PC-9 (cell line): ENCODE measurements at regions of chr1 and their contacts with region 1.

Region 1: GRCh38 chr1:202018468-202019255 is 8.3 kb downstream of the ELF3 start:
- DNase-seq: peak; percentile 96 to 99
- H3K4me3 ChIP-seq: peak overlapping the region; percentile 86; the same call in 1 of the 2 replicates
- H3K27ac ChIP-seq: peak overlapping the region; percentile 97
- H3K4me1 ChIP-seq: peaks cover 98% of the 10 kb centered on the region
- H3K27me3 ChIP-seq: no peaks in the 10 kb centered on the region
- CTCF ChIP-seq: no peak

Region 2: GRCh38 chr1:201870397-201870796 is 148.3 kb before region 1 on chr1:
- CTCF ChIA-PET with region 1: no interaction called
- POLR2A ChIA-PET with region 1: no interaction called
- intact Hi-C with region 1: no loop called
- DNase-seq: no peak
- H3K4me3 ChIP-seq: no peak overlapping the region
- H3K27ac ChIP-seq: no peak overlapping the region
- H3K4me1 ChIP-seq: no peaks in the 10 kb centered on the region
- H3K27me3 ChIP-seq: no peaks in the 10 kb centered on the region
- CTCF ChIP-seq: no peak

Region 3: DNA sequence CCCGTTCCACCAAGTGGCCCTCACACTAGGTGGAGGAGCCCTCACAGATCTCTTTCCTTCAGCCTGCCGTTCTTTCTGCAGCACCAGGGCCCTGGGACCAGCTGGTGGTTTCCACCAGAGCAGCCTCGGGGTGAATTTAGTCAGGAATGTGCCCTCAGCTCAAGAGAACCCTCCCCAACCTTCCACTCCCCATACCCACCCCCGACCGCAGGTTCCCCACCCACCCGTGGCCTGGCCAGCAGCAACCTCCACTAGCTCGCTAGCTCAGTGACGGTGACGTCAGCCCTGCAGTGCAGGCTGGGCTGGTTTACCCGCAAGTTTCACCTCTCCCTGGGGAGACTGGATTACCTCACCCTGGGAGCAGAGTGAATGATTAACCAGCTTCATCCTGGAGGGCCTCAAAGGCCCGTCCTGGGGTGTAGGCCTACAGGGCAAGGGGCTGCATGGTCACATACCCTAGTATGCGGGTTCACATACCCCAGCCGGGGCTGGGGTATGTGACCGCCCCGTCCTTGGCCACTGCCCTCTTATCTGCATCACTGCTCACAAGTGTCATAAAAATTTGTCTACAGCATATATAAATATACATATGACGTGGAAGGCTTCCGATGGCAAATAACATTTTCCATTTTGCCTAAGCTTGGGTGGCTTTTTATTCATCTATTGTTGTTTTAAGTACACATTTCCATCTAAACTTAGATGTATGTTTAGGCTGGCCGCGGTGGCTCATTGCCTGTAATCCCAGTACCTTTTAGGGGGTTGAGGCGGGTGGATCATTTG is 16.2 kb after region 1 on chr1:
- CTCF ChIA-PET with region 1: interaction called, 3 read pairs
- POLR2A ChIA-PET with region 1: interaction called, 56 read pairs
- intact Hi-C with region 1: loop called (anchors 1 kb)
- DNase-seq: peak; percentile 98
- H3K4me3 ChIP-seq: peak overlapping the region; percentile 26; the same call in 1 of the 2 replicates
- H3K27ac ChIP-seq: peak overlapping the region; percentile 89
- H3K4me1 ChIP-seq: peaks cover 68% of the 10 kb centered on the region
- H3K27me3 ChIP-seq: no peaks in the 10 kb centered on the region
- CTCF ChIP-seq: no peak

Region 4: GRCh38 chr1:202056644-202057461 is 38.2 kb after region 1 on chr1:
- CTCF ChIA-PET with region 1: interaction called, 4 read pairs
- POLR2A ChIA-PET with region 1: interaction called, 24 read pairs
- intact Hi-C with region 1: loop called (anchors 1 kb)
- DNase-seq: peak; percentile 97 to 98
- H3K4me3 ChIP-seq: no peak overlapping the region
- H3K27ac ChIP-seq: peak overlapping the region; percentile 98
- H3K4me1 ChIP-seq: peaks cover 64% of the 10 kb centered on the region
- H3K27me3 ChIP-seq: no peaks in the 10 kb centered on the region
- CTCF ChIP-seq: no peak

Region 5: GRCh38 chr1:202105539-202106276 is 87.0 kb after region 1 on chr1:
- CTCF ChIA-PET with region 1: interaction called, 3 read pairs
- POLR2A ChIA-PET with region 1: interaction called, 25 read pairs
- intact Hi-C with region 1: loop called (anchors 1 kb)
- DNase-seq: peak; percentile 91 to 95
- H3K4me3 ChIP-seq: peak overlapping the region; percentile 26; the same call in 1 of the 2 replicates
- H3K27ac ChIP-seq: peak overlapping the region; percentile 99
- H3K4me1 ChIP-seq: peaks cover 76% of the 10 kb centered on the region
- H3K27me3 ChIP-seq: no peaks in the 10 kb centered on the region
- CTCF ChIP-seq: no peak

Region 6: DNA sequence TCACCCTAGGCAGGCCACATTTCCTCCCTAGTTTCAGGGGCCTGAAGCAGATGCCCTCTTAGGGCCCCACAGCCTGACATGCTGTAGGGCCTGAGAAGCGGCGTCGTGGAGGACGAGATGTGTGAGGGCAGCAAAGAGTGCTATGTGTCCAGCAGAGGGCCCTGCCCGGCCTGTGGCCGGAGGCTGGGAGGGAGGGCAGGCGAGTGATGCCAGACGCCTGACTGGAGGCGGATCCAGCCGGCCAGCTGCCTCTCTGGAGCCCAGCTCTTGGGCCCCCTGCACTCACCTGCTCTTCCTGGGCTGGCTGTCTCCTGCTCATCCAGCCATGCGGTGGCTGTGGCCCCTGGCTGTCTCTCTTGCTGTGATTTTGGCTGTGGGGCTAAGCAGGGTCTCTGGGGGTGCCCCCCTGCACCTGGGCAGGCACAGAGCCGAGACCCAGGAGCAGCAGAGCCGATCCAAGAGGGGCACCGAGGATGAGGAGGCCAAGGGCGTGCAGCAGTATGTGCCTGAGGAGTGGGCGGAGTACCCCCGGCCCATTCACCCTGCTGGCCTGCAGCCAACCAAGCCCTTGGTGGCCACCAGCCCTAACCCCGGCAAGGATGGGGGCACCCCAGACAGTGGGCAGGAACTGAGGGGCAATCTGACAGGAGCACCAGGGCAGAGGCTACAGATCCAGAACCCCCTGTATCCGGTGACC is 104.1 kb after region 1 on chr1 and contains the start of gene GPR37L1:
- CTCF ChIA-PET with region 1: interaction called, 3 read pairs
- POLR2A ChIA-PET with region 1: interaction called, 7 read pairs
- intact Hi-C with region 1: loop called (anchors 1 kb)
- DNase-seq: peak; percentile 51 to 65
- H3K4me3 ChIP-seq: no peak within 1 kb of the TSS
- H3K27ac ChIP-seq: no peak within 1 kb of the TSS
- H3K4me1 ChIP-seq: peaks cover 11% of the 10 kb centered on the region
- H3K27me3 ChIP-seq: no peaks in the 10 kb centered on the region
- CTCF ChIP-seq: peak; percentile 57
- total RNA-seq, gene GPR37L1: 0.30 and 0.33 TPM in 2 replicates

Region 7: DNA sequence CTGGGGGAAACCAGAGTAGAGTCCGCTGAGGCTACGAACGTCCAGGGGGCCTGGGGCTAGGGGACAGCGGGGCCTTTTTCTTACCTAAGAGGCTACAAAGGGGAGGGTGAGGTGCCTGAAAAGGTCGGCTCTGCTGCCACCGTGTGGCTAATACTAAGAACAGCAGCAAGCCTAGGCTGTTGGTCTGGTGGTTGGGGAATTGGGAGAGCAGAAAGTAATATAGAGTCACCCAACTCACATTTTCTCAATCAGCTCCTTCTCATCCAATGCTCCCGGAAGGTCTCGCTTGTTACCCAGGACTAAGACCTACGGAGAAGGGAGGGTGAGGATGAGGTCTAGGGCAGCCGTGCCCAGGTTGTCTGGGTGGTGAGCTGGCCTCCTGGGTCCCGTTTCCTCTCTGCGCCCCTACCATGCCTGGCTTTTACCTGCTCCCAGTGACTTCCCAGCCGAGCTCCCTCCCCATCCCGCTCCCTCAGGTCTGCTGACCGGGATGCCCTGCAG is 116.6 kb after region 1 on chr1:
- CTCF ChIA-PET with region 1: no interaction called
- POLR2A ChIA-PET with region 1: no interaction called
- intact Hi-C with region 1: no loop called
- DNase-seq: peak; percentile 49 to 50
- H3K4me3 ChIP-seq: no peak overlapping the region
- H3K27ac ChIP-seq: no peak overlapping the region
- H3K4me1 ChIP-seq: peaks cover 12% of the 10 kb centered on the region
- H3K27me3 ChIP-seq: no peaks in the 10 kb centered on the region
- CTCF ChIP-seq: peak; percentile 90